K562 (cell line): ENCODE measurements at regions of chr6 and their contacts with region 1.

Region 1: GRCh38 chr6:135257631-135258405 is 76.7 kb downstream of the MYB start:
- DNase-seq: peak in 1 of 4 experiments; percentile 50
- ATAC-seq: peak; percentile 58
- H3K4me3 ChIP-seq: no peak overlapping the region
- H3K27ac ChIP-seq: no peak overlapping the region
- H3K4me1 ChIP-seq: peaks cover 16 to 68% of the 10 kb centered on the region in 2 experiments
- H3K27me3 ChIP-seq: no peaks in the 10 kb centered on the region
- CTCF ChIP-seq: peak in 1 of 3 experiments; percentile 47; a peak in 2 of 6 replicates
- EP300 ChIP-seq: no peak
- POLR2A ChIP-seq: no peak
- RAD21 ChIP-seq: peak; percentile 40 to 65

Region 2: DNA sequence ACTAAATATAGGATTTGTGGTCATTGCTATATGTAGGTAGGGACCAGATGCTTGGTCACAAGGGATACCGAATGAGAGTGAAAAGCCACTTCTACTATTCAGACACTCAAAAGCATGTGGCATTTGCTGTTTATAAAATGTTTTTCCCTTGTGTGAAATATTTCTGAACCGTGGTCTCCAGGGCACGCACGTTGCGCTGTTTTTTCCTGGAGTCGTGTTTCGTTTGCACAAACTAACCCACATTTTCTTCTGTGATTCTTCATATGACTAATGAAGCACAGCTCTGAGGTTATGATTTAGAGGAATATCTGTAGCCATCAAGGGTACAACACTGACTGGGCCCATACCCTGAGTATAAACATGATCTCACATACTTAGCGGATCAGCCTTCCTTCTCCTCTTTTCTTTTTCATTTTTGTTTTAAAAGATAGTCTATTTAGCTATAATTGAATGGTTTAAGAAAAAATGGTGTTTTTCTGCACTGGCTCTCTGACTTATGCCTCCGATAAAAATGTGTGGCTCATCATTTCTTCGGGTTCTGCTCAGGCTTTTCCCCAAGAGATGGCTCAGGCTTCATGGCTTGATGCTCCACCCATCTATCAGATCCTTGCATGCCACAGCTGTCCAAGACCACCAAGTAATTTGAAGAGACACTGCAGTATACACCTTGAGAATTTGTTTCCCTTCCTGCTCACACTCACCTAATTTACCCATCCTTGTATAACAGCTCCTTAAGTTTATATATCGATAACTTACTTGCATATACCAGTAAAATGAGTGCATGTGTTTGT is 143.3 kb before region 1 on chr6:
- CTCF ChIA-PET with region 1: no interaction called
- POLR2A ChIA-PET with region 1: no interaction called
- in situ Hi-C with region 1: no loop called
- intact Hi-C with region 1: no loop called
- DNase-seq: no peak
- ATAC-seq: no peak
- H3K4me3 ChIP-seq: no peak overlapping the region
- H3K27ac ChIP-seq: no peak overlapping the region
- H3K4me1 ChIP-seq: peaks cover 7 to 21% of the 10 kb centered on the region in 2 experiments; a peak in 4 of 5 replicates
- H3K27me3 ChIP-seq: no peaks in the 10 kb centered on the region
- CTCF ChIP-seq: no peak
- EP300 ChIP-seq: no peak
- POLR2A ChIP-seq: no peak
- RAD21 ChIP-seq: no peak

Region 3: GRCh38 chr6:135183532-135184440 is 74.0 kb before region 1 on chr6:
- CTCF ChIA-PET with region 1: no interaction called
- POLR2A ChIA-PET with region 1: no interaction called
- in situ Hi-C with region 1: no loop called
- intact Hi-C with region 1: loop called (anchors 1 kb)
- DNase-seq: peak; percentile 66 to 96 (median 76)
- ATAC-seq: peak; percentile 81
- H3K4me3 ChIP-seq: peak overlapping the region; percentile 71
- H3K27ac ChIP-seq: peak overlapping the region; percentile 73
- H3K4me1 ChIP-seq: peaks cover 23 to 26% of the 10 kb centered on the region in 2 experiments
- H3K27me3 ChIP-seq: no peaks in the 10 kb centered on the region
- CTCF ChIP-seq: peak; percentile 87 to 92 (median 92)
- EP300 ChIP-seq: peak; percentile 10
- POLR2A ChIP-seq: no peak
- RAD21 ChIP-seq: peak; percentile 85 to 87